ENCODE measurements at regions of chr6 and their contacts with region 1.

Region 1: GRCh38 chr6:35955976-35956375 is 35.1 kb upstream of the SRPK1 start:
- DNase-seq: no peak
- ATAC-seq: no peak
- H3K4me3 ChIP-seq: no peak overlapping the region
- H3K27ac ChIP-seq: no peak overlapping the region
- H3K4me1 ChIP-seq: peaks cover 10% of the 10 kb centered on the region; the same call in 1 of the 2 replicates
- H3K27me3 ChIP-seq: no peaks in the 10 kb centered on the region; the same call in 1 of the 2 replicates
- CTCF ChIP-seq: peak; percentile 57

Region 2: GRCh38 chr6:35757456-35758123 is 198.4 kb before region 1 on chr6:
- CTCF ChIA-PET with region 1: interaction called, 3 read pairs
- POLR2A ChIA-PET with region 1: no interaction called
- intact Hi-C with region 1: loop called (anchors 10 kb)
- DNase-seq: peak; percentile 38
- ATAC-seq: no peak
- H3K4me3 ChIP-seq: no peak overlapping the region
- H3K27ac ChIP-seq: no peak overlapping the region
- H3K4me1 ChIP-seq: peaks cover 6% of the 10 kb centered on the region; the same call in 1 of the 2 replicates
- H3K27me3 ChIP-seq: 0 out of 2 replicates have a peak, but pooled peaks cover 4% of the 10 kb centered on the region
- CTCF ChIP-seq: peak; percentile 47

Region 3: DNA sequence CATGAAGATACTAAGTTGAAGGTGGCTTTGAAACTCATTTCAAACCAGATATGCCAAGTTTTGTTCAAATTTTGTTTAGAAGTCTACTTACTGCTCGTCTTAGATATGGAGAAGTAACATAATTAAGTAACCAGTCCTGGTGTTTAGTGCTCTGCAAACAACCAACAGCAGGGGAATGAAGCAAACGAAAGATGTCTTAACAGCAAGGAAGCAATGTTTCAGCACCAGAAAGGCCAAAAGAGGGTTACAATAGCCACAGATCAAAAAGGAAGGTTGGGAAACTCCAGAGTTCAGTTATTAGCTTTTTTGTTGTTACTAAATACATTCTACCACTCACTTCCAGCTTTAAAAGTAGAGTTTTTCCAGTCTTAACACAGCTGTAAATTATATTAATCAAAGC is 105.8 kb before region 1 on chr6:
- CTCF ChIA-PET with region 1: no interaction called
- POLR2A ChIA-PET with region 1: no interaction called
- intact Hi-C with region 1: no loop called
- DNase-seq: no peak
- ATAC-seq: no peak
- H3K4me3 ChIP-seq: no peak overlapping the region
- H3K27ac ChIP-seq: no peak overlapping the region
- H3K4me1 ChIP-seq: no peaks in the 10 kb centered on the region
- H3K27me3 ChIP-seq: no peaks in the 10 kb centered on the region
- CTCF ChIP-seq: no peak

Region 4: GRCh38 chr6:36289281-36289878 is 333.4 kb after region 1 on chr6:
- CTCF ChIA-PET with region 1: interaction called, 11 read pairs
- POLR2A ChIA-PET with region 1: no interaction called
- intact Hi-C with region 1: no loop called
- DNase-seq: no peak
- ATAC-seq: no peak
- H3K4me3 ChIP-seq: no peak overlapping the region
- H3K27ac ChIP-seq: no peak overlapping the region
- H3K4me1 ChIP-seq: no peaks in the 10 kb centered on the region; the same call in 1 of the 2 replicates
- H3K27me3 ChIP-seq: no peaks in the 10 kb centered on the region
- CTCF ChIP-seq: no peak

Region 5: GRCh38 chr6:36340618-36341454 is 384.9 kb after region 1 on chr6:
- CTCF ChIA-PET with region 1: interaction called, 16 read pairs
- POLR2A ChIA-PET with region 1: no interaction called
- intact Hi-C with region 1: no loop called
- DNase-seq: peak; percentile 59
- ATAC-seq: peak; percentile 82
- H3K4me3 ChIP-seq: peak overlapping the region; percentile 54; the same call in 1 of the 2 replicates
- H3K27ac ChIP-seq: no peak overlapping the region
- H3K4me1 ChIP-seq: peaks cover 7% of the 10 kb centered on the region
- H3K27me3 ChIP-seq: 0 out of 2 replicates have a peak, but pooled peaks cover 7% of the 10 kb centered on the region
- CTCF ChIP-seq: peak; percentile 95